Activated CD4-positive, alpha-beta T cell treated with anti-CD3 and anti-CD28 coated beads, Interleukin-2, amount 10 ng/mL, durations not matched to agents 24 days and 14 days (primary cell): ENCODE measurements at regions of chr5 and their contacts with region 1.

Region 1: GRCh38 chr5:181260387-181261319 is at the start of gene TRIM52:
- DNase-seq: peak; percentile 97
- H3K4me3 Mint-ChIP-seq: peak within 1 kb of the TSS; percentile 97
- H3K27ac Mint-ChIP-seq: peak within 1 kb of the TSS; percentile 97
- H3K4me1 Mint-ChIP-seq: peaks cover 37% of the 10 kb centered on the region
- H3K27me3 Mint-ChIP-seq: no peaks in the 10 kb centered on the region
- total RNA-seq, gene TRIM52: 15.7 and 16.8 TPM in 2 replicates

Region 2: GRCh38 chr5:180222056-180222455 is 1038.6 kb before region 1 on chr5:
- intact Hi-C with region 1: no loop called
- DNase-seq: no peak
- H3K4me3 Mint-ChIP-seq: no peak overlapping the region
- H3K27ac Mint-ChIP-seq: no peak overlapping the region
- H3K4me1 Mint-ChIP-seq: no peaks in the 10 kb centered on the region
- H3K27me3 Mint-ChIP-seq: no peaks in the 10 kb centered on the region

Region 3: DNA sequence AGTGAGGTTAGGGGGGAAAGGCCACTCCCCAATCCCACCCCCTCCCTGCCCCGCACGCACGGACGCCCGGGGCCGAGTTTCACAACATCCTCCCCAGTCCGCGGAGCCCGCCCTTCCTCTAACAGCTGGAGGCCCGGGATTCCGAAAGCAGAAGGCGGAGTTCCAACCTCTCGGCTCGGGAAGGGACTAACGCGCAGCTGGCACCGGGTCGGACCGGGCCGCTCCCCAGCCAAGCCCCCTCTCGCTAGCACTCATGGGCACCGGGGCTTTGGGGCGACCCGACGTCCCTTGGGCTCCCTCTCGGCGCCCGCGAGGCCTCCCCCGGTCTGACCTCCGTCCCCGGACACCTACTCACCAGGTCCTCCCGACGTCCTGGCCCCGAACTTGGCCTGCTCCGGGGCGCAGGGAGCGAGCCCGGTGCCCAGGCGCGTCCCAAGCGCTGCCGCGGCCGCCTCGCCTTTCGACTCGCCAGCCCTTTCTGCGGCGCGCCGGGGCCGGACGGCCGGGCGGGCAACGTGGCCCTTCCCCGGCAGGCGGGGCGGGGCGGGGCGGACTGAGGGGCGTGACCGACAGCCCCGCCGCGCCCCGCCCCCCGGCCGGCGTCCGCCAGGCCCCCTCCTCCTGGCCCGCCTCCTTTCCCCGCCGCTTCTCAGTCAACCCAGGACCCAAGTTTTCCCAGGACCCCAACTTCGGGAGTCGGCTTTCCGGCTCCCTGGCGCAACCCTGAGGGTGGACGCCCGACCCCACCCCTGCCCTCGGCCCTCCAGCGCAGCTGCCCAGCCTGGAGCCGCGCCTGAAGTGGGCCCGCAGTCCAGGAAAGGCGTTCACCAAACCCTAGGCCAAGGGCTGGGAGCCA is 458.1 kb before region 1 on chr5 and contains the start of gene MGAT1:
- intact Hi-C with region 1: no loop called
- DNase-seq: peak; percentile 94
- H3K4me3 Mint-ChIP-seq: peak within 1 kb of the TSS; percentile 87
- H3K27ac Mint-ChIP-seq: peak within 1 kb of the TSS; percentile 88
- H3K4me1 Mint-ChIP-seq: peaks cover 77% of the 10 kb centered on the region
- H3K27me3 Mint-ChIP-seq: no peaks in the 10 kb centered on the region
- total RNA-seq, gene MGAT1: 119 and 122 TPM in 2 replicates

Region 4: DNA sequence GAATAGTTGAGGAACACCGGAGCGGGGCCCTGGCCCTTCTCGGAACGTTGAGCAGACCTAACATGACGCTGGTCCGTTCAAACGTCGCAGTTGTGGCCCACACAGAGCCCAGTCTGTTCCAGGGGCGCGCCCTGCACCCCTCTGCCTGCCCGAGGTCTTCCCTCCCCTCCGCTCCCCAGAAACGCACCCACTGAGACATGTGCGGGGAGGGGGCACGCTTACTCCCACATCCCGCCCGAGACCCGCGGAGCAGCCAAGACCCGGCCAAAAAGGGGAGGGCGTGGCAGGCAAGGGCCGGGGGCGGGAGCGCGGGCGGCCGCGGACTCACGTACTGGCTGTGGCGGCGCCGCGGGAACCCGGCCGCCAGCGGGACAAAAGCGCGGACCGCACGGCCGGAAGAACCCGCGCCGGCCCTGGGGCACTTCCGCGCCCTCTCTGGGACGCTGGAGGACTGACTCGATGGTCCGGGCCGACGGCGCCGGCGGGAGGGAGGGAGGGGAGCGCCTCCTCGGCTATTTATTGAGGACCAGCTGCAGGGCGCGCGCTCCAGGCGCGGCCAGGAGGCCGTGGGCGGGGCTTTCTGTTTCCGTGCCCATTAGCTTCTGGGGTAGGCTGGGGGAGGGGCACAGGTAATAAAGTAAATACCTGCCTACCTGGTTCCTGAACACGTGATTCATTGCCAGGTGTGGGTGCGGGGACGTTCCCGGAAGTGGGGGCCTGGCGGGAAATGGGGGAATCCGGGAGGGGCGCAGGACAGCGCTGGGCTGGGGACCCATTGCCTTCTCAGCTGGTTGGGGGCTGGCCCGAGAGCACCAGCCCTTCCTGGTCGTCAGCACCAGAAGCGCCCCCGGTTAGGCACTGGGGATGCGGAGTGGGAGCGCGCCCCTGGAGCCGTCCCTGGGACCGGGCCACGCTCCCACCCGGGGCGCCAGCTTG is 399.5 kb before region 1 on chr5 and contains the start of gene ZFP62:
- intact Hi-C with region 1: loop called (anchors 10 kb)
- DNase-seq: peak; percentile 96
- H3K4me3 Mint-ChIP-seq: peak within 1 kb of the TSS; percentile 91
- H3K27ac Mint-ChIP-seq: peak within 1 kb of the TSS; percentile 94
- H3K4me1 Mint-ChIP-seq: peaks cover 15% of the 10 kb centered on the region
- H3K27me3 Mint-ChIP-seq: peaks cover 6% of the 10 kb centered on the region
- total RNA-seq, gene ZFP62: 26.7 and 28.0 TPM in 2 replicates

Region 5: DNA sequence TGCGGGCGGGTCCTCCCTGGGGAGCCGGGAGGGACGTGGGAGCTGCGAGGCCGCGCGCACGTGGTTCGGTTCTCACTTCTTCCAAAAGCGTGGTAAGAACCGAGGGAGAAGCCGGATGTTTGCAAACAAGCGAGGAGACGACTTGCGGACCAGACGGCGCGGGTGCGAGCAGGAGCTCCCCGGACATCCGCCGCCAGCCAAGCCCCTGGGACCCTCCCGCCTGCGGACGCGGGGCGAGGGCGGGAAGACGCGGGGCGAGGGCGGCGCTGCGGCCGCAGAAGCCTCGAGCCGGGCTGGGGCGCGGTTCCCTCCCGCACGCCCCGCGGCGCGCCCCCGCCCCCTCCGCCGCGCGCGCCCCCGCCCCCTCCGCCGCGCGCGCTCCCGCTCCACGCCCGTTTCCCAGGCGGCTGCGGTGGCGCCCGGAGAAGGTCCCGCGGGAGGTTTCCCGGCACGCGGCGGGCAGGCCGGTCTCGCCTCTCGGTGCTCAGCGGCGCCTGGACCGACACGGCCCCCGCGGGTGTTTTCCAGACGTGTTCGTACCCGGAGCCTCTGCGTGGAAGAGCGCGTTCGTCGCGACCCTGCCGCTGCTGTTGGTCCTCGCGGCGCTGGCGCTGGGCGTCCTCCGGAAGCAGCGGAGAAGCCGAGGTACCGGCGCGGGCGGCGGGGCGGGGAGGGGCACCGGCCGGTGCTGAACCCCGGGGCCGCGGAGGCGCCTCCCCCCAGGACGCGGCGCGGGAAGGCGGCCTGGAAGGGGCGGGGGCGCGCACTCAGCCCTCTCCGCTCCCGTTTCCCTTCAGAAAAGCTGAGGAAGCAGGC is 207.8 kb before region 1 on chr5:
- intact Hi-C with region 1: no loop called
- DNase-seq: peak; percentile 66
- H3K4me3 Mint-ChIP-seq: peak overlapping the region; percentile 75
- H3K27ac Mint-ChIP-seq: no peak overlapping the region
- H3K4me1 Mint-ChIP-seq: peaks cover 11% of the 10 kb centered on the region
- H3K27me3 Mint-ChIP-seq: peaks cover 66% of the 10 kb centered on the region

Region 6: GRCh38 chr5:181159286-181159829 is 101.3 kb before region 1 on chr5:
- intact Hi-C with region 1: loop called (anchors 2 kb)
- DNase-seq: peak; percentile 97
- H3K4me3 Mint-ChIP-seq: peak overlapping the region; percentile 60
- H3K27ac Mint-ChIP-seq: peak overlapping the region; percentile 85
- H3K4me1 Mint-ChIP-seq: peaks cover 30% of the 10 kb centered on the region
- H3K27me3 Mint-ChIP-seq: peaks cover 14% of the 10 kb centered on the region

Region 7: GRCh38 chr5:181191529-181192394 is 68.9 kb before region 1 on chr5:
- intact Hi-C with region 1: loop called (anchors 1 kb)
- DNase-seq: peak; percentile 99
- H3K4me3 Mint-ChIP-seq: peak overlapping the region; percentile 92
- H3K27ac Mint-ChIP-seq: peak overlapping the region; percentile 95
- H3K4me1 Mint-ChIP-seq: peaks cover 40% of the 10 kb centered on the region
- H3K27me3 Mint-ChIP-seq: peaks cover 10% of the 10 kb centered on the region

Region 8: GRCh38 chr5:181207214-181208107 is 53.2 kb before region 1 on chr5:
- intact Hi-C with region 1: loop called (anchors 1 kb)
- DNase-seq: peak; percentile 92
- H3K4me3 Mint-ChIP-seq: peak overlapping the region; percentile 91
- H3K27ac Mint-ChIP-seq: peak overlapping the region; percentile 91
- H3K4me1 Mint-ChIP-seq: peaks cover 31% of the 10 kb centered on the region
- H3K27me3 Mint-ChIP-seq: peaks cover 28% of the 10 kb centered on the region

Region 9: DNA sequence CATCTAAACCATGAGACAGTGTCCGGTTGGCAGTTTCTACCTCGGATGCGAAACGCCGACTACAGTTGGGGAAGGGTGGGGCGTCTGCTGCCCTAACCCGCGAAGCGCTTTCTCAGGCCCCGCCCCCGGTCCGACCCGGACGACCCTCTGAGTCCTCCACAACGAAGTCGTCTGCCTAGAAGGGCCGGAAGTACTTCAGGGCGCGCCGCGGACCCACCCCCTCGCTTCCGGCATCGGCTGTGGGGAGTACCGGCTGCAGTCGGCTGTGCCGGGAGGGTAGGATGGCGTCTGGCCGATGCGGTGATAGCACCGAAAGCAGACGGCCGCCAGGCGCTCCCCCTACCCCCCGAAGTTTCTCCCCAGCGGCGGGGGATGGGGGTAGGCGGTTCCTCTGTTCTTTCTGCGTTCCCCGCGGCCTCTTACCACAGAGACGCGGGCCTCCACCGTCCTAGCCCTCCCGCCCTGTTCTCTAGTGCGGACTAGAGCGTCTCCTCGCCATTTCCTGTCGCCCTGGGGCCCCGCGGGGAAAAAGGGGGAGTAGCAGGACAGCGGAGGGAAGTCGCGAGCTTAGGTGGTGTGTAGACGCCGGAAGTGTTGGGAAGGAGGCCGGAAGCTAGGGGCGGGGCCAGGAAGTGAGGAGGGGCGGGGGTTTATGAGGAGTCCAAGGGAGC is 37.5 kb before region 1 on chr5 and contains the start of gene TRIM41:
- intact Hi-C with region 1: loop called (anchors 1 kb)
- DNase-seq: peak; percentile 99
- H3K4me3 Mint-ChIP-seq: peak within 1 kb of the TSS; percentile 98
- H3K27ac Mint-ChIP-seq: peak within 1 kb of the TSS; percentile 99
- H3K4me1 Mint-ChIP-seq: peaks cover 53% of the 10 kb centered on the region
- H3K27me3 Mint-ChIP-seq: peaks cover 5% of the 10 kb centered on the region
- total RNA-seq, gene TRIM41: 31.6 and 35.2 TPM in 2 replicates

Region 10: DNA sequence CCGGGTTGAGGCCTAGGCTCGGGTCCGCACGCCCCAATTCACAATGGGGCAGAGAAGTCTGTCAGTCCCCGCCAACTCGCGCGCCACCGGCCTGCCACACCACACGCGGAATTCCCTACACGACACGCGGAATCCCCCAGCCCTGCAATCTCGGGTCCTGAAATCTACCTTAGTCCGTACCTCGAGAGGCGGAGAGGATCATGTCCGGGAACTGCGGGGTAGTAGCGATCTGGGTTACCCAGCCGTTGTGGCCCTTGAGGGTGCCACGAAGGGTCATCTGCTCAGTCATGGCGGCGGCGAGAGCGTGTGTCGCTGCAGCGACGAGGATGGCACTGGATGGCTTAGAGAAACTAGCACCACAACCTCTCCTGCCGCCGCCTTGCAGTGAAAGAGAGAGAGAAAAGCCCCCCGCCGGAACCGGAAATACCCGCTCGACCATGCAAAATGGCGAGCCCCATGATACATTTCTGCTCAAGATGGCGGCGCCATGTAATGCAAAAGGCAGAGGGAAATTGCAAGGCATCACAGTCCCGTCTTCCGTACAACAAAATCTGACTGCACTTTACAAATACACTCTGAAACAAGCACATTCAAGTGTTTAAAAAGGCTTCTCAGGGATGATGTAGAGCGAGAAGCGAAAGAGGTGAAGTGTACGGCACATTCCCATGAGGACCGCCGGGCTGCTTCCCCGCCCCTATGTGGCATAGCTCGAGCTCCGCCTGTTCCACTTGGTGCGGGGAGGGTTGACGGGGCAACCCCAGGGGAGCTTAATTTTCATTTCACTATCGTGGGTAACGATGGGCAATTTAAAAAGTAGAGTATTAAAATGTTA is 16.9 kb before region 1 on chr5 and contains the start of gene RACK1:
- intact Hi-C with region 1: loop called (anchors 1 kb)
- DNase-seq: peak; percentile 96
- H3K4me3 Mint-ChIP-seq: peak within 1 kb of the TSS; percentile 98
- H3K27ac Mint-ChIP-seq: peak within 1 kb of the TSS; percentile 99
- H3K4me1 Mint-ChIP-seq: peaks cover 49% of the 10 kb centered on the region
- H3K27me3 Mint-ChIP-seq: no peaks in the 10 kb centered on the region
- total RNA-seq, gene RACK1: 2,172 and 2,196 TPM in 2 replicates